Ascending aorta (tissue), 2 donors: ENCODE measurements at regions of chr5 and their contacts with region 1.

Region 1: DNA sequence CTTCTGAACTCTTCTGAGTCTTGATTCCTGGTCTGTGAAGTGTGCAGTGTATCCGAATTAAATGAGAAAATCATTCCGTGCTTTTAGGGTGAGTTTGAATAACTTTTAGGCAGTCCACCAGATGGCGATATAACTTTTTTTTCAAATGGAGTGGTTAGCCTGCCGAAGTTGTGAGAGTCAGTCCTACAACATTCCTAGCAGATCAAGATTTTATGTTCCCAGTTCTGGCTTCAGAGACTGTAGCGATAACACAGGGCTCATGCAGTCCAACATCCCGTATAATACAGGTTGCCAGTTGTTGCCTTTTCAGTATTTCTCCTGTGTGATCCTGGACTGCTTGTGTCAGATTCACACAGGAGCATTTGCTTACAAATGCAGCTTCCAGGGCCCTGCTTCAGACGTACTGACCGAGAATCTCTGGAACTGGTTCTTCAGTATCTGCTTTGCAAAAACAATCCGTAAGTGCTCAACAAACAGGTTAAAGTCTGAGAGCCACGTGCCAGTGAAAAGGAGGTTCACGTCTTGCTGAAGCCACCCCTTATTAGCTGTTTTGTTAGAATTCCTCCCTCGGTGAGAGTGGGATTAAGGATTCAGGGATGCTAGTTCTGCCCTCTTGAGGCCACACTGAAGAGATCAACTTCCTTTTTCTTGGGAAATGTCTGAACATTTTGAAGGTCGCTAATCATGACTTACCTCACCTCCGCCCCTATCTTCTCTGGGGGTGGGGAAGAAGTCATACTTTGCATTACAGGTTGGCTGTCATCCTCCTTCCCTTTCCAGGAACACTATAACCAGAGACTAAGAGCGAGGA is 22.8 kb downstream of the SMIM3 start:
- DNase-seq: no peak
- H3K4me3 ChIP-seq: peak overlapping the region; percentile 55 to 58
- H3K27ac ChIP-seq: peak overlapping the region; percentile 52 to 57
- H3K4me1 ChIP-seq: peaks cover 0 to 3% of the 10 kb centered on the region in 2 donors
- H3K27me3 ChIP-seq: no peaks in the 10 kb centered on the region
- CTCF ChIP-seq: peak; percentile 11 to 61 (median 22)

Region 2: GRCh38 chr5:150758531-150759333 is 42.6 kb before region 1 on chr5 and contains the start of gene DCTN4:
- intact Hi-C with region 1: loop called (anchors 1 kb)
- DNase-seq: peak; percentile 93 to 98
- H3K4me3 ChIP-seq: peak within 1 kb of the TSS; percentile 73 to 74
- H3K27ac ChIP-seq: peak within 1 kb of the TSS; percentile 93 to 95
- H3K4me1 ChIP-seq: peaks cover 4 to 30% of the 10 kb centered on the region in 2 donors
- H3K27me3 ChIP-seq: no peaks in the 10 kb centered on the region
- CTCF ChIP-seq: peak in 1 of 3 experiments; percentile 9
- total RNA-seq, gene DCTN4: 28.1 TPM